ENCODE measurements at regions of chr2 and their contacts with region 1.

Region 1: DNA sequence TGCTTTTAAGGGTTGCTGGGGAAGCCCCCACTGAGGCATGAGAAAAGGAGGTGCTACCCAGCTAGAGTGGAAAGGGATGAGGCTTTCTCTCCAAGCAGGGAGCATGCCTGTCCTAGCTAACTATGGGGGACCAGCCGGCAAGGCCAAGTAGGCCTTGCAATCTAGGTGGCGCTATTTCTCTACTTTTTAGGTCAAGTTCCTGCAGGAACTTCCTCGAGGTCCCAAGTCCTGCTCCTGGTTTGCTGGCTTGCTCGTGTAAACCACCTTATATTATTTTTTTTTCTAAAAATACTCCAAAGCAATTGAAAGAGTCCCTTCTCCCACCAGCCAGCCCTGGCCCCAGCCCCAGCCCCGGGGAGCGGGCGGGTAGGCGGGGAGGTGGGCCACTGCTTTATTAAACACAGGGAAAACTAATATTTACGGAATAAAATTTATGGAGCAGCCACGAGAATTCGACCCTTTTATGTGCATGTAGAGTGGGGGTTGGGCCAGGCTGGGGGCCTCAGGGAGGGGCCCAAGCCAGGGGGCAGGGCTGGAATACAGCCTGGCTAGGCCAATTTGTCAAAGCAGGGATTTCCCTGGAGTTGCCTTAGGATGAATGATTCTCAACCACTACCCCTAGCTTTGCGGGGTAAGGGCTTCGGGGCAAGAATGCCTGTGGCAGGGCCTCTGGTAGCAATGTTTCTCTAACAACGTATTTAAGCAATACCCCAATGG is 12.8 kb upstream of the IHH start:
- DNase-seq: peak; percentile 77 to 78
- H3K4me3 ChIP-seq: no peak overlapping the region
- H3K4me3 Mint-ChIP-seq: peak overlapping the region; percentile 59
- H3K27ac Mint-ChIP-seq: peak overlapping the region; percentile 72
- H3K4me1 ChIP-seq: peaks cover 48% of the 10 kb centered on the region
- H3K4me1 Mint-ChIP-seq: peaks cover 46% of the 10 kb centered on the region
- H3K27me3 ChIP-seq: no peaks in the 10 kb centered on the region
- H3K27me3 Mint-ChIP-seq: no peaks in the 10 kb centered on the region
- CTCF ChIP-seq: peak; percentile 65 to 79

Region 2: DNA sequence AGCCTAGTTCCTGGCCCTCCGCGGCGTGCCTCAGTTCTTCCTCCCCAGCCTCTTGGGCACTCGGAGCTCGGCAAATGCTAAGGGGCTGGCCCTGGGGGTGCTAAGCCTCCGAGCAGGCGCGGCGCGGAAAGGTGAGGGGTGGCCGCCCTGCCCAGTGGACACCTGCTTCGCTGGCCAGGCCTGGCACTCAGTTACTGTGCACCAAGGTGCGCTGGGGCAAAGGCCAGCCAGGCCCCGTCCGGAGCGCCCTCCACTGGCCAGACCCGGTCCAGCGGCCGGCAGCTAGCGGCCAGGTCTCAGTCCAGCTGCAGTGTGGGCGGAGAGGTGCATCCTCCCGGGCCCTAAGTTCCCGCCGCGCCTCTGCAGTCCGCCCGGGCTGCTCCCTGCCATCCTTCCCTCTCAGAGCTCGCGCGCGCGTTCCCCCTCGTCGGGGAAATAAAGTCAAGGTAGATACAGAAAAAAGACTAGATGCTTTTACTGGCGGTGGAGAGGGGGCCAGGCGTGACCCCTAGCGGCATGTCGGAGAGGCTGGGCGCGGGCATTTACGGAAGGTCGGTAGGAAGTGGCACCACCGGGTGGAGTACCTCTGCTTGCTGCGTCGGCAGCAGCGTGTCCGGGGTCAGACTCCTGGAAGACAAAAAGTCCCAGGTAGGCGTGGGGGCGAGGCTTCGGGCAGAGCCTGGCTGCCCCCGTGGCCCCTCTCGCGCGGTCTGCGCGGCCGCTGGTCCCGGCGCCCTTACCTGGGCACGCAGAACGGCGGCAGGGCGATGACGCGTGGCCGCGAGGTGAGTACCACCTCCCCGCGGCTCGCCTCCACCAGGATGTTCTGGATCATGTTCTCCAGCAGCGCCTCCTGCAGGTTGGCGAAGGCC is 70.9 kb before region 1 on chr2:
- CTCF ChIA-PET with region 1: interaction called, 4 read pairs
- POLR2A ChIA-PET with region 1: no interaction called
- intact Hi-C with region 1: loop called (anchors 2 kb)
- DNase-seq: peak in 1 of 2 experiments; percentile 85
- H3K4me3 ChIP-seq: peak overlapping the region; percentile 67
- H3K4me3 Mint-ChIP-seq: peak overlapping the region; percentile 79
- H3K27ac Mint-ChIP-seq: no peak overlapping the region
- H3K4me1 ChIP-seq: peaks cover 25% of the 10 kb centered on the region
- H3K4me1 Mint-ChIP-seq: peaks cover 15% of the 10 kb centered on the region
- H3K27me3 ChIP-seq: no peaks in the 10 kb centered on the region
- H3K27me3 Mint-ChIP-seq: peaks cover 7% of the 10 kb centered on the region
- CTCF ChIP-seq: peak; percentile 48 to 77

Region 3: DNA sequence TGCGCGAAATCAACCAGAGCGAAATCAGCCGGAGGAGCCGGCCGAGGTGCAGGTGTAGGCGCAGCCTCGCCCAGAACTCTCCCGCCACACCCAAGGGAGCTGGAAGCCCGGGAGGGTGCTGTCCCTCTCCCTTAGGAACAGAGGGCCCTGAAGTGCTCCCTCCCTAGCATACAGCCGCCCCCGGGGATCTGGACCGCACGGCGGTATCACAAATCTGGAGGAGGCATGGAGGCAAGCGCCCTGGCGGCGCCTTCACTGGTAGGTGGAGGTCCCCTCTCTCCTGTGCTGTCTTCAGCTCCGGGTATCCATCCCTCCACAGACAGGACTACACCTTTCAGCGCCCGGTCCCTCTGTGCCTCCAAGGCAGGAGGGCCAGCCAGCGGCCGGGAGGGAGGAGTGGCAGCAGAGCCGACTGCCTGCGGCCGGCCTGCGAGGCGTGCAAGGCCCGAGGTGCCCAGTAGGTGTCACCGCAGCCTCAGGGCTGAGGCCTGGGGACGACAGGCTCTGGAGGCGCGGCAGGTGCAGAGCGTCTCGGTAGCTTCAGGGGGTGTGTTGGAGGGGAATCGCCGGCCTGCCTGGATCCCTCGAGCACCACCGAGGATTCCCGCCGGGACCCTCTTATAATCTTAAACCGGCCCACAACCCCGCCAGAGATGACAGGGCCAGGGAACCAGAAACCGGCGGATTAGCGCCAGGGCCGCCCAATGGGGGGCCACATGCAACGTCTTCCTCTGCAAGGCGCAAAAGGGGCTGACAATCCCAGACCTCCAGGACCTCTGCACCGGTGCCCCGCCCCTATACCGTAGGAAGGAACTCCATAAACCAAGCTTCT is 15.6 kb before region 1 on chr2:
- CTCF ChIA-PET with region 1: interaction called, 74 read pairs
- POLR2A ChIA-PET with region 1: interaction called, 23 read pairs
- intact Hi-C with region 1: loop called (anchors 1 kb)
- DNase-seq: peak; percentile 82 to 89
- H3K4me3 ChIP-seq: peak overlapping the region; percentile 99
- H3K4me3 Mint-ChIP-seq: peak overlapping the region; percentile 92
- H3K27ac Mint-ChIP-seq: no peak overlapping the region
- H3K4me1 ChIP-seq: peaks cover 11% of the 10 kb centered on the region
- H3K4me1 Mint-ChIP-seq: peaks cover 7% of the 10 kb centered on the region
- H3K27me3 ChIP-seq: no peaks in the 10 kb centered on the region
- H3K27me3 Mint-ChIP-seq: peaks cover 3% of the 10 kb centered on the region
- CTCF ChIP-seq: peak; percentile 91 to 95

Region 4: GRCh38 chr2:219104107-219105035 is 30.8 kb after region 1 on chr2:
- CTCF ChIA-PET with region 1: interaction called, 37 read pairs
- POLR2A ChIA-PET with region 1: no interaction called
- intact Hi-C with region 1: loop called (anchors 1 kb)
- DNase-seq: peak; percentile 60
- H3K4me3 ChIP-seq: no peak overlapping the region
- H3K4me3 Mint-ChIP-seq: no peak overlapping the region
- H3K27ac Mint-ChIP-seq: no peak overlapping the region
- H3K4me1 ChIP-seq: peaks cover 10% of the 10 kb centered on the region
- H3K4me1 Mint-ChIP-seq: peaks cover 4% of the 10 kb centered on the region
- H3K27me3 ChIP-seq: no peaks in the 10 kb centered on the region
- H3K27me3 Mint-ChIP-seq: no peaks in the 10 kb centered on the region
- CTCF ChIP-seq: peak; percentile 80 to 86

Region 5: DNA sequence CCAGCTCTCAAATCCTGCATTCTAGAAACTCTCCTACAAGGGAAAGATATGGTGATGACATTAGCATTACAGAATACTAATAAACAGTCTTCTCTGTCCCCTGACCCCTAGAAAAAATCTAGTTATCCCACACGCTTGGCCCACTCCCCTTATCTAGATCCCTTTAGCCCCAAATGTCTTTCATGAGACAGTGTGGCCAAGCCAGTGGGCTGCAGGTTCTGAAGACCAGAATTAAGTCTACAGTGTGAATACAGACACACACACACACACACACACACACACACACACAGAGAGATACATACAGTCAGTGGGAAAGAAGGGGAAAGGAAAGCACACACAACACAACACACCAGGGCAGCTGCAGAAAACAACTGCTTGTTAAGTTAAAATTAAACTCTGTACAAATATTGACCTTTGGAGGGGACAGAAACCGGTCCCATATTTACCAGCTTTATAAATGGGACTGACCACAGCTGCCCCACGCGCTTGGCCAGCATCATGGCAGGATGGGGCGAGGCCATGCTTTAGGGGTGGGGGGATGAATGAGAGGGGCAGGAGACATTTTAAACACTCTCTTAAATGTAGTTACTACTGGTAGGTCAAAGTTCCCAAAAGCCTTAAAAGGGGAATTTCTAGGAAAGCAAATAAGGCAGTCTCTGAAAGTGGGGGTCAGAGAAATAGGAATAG is 37.9 kb after region 1 on chr2:
- CTCF ChIA-PET with region 1: interaction called, 89 read pairs
- POLR2A ChIA-PET with region 1: no interaction called
- intact Hi-C with region 1: loop called (anchors 1 kb)
- DNase-seq: peak; percentile 63 to 81
- H3K4me3 ChIP-seq: no peak overlapping the region
- H3K4me3 Mint-ChIP-seq: peak overlapping the region; percentile 46
- H3K27ac Mint-ChIP-seq: peak overlapping the region; percentile 54
- H3K4me1 ChIP-seq: peaks cover 51% of the 10 kb centered on the region
- H3K4me1 Mint-ChIP-seq: peaks cover 41% of the 10 kb centered on the region
- H3K27me3 ChIP-seq: no peaks in the 10 kb centered on the region
- H3K27me3 Mint-ChIP-seq: no peaks in the 10 kb centered on the region
- CTCF ChIP-seq: no peak

Region 6: DNA sequence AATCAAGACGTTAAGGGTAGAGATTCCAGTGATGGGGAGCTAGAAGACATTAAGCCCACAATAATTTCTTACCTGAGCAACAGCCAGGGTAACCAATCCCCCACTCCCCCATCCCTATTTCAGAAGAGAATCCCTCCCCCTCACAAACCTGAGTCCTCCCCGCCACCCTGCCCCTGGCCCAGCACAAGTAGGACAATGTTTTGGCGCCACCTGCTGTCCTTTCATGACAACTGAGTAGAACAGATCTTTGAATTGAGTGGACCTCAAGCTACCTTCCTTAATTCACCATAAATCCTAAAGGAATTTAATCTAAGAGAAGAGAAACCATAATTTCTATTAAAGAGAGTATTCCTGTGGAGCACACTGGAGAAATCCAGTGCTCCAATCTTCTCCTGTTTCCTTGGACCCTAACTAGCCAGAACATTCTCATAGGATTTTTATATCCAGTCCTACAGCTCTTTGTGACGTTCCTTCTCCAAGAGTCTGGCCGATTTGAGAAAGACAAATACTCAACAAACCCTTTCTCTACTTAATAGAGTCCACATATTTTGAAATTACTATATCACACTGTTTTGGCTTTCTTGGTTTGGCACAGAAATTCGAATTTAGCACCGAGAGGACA is 46.0 kb after region 1 on chr2:
- CTCF ChIA-PET with region 1: interaction called, 89 read pairs
- POLR2A ChIA-PET with region 1: no interaction called
- intact Hi-C with region 1: loop called (anchors 1 kb)
- DNase-seq: peak; percentile 77 to 80
- H3K4me3 ChIP-seq: no peak overlapping the region
- H3K4me3 Mint-ChIP-seq: no peak overlapping the region
- H3K27ac Mint-ChIP-seq: no peak overlapping the region
- H3K4me1 ChIP-seq: peaks cover 36% of the 10 kb centered on the region
- H3K4me1 Mint-ChIP-seq: peaks cover 44% of the 10 kb centered on the region
- H3K27me3 ChIP-seq: no peaks in the 10 kb centered on the region
- H3K27me3 Mint-ChIP-seq: no peaks in the 10 kb centered on the region
- CTCF ChIP-seq: peak; percentile 84 to 89

Region 7: DNA sequence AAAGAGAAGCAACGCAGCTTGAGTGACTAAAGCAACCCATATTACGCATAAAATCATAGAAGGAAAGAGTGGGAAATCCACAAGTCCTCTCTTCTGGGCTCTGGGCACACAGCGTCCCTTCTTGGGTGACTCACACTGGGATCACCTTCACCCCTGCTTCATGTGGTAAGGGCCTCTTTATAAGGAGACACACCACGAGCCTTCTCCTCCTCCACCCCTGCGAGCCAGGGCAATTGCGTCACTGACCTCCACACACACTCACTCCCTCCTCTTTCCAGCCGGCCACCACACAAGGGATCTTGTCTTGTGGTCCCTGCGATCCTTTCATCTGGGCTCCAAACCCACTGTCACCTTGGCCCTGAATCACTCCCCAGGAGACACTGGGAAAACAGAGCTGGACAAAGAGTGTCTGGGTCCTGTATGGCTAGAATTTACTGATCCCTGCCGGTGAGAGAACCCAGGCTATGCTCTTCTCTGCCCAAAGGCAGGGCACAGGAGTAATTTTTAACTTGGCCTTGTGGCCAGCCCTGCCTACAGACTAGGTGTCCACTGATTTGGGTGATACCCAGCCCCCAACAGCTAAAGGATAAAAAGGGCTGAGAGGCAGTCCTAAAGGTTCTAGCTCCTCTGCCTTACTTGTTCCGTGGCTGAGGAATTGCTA is 51.8 kb after region 1 on chr2:
- CTCF ChIA-PET with region 1: interaction called, 89 read pairs
- POLR2A ChIA-PET with region 1: no interaction called
- intact Hi-C with region 1: loop called (anchors 1 kb)
- DNase-seq: peak; percentile 57 to 85
- H3K4me3 ChIP-seq: no peak overlapping the region
- H3K4me3 Mint-ChIP-seq: peak overlapping the region; percentile 53
- H3K27ac Mint-ChIP-seq: peak overlapping the region; percentile 25
- H3K4me1 ChIP-seq: peaks cover 73% of the 10 kb centered on the region
- H3K4me1 Mint-ChIP-seq: peaks cover 50% of the 10 kb centered on the region
- H3K27me3 ChIP-seq: no peaks in the 10 kb centered on the region
- H3K27me3 Mint-ChIP-seq: no peaks in the 10 kb centered on the region
- CTCF ChIP-seq: no peak

Region 8: GRCh38 chr2:219261024-219261855 is 187.7 kb after region 1 on chr2:
- CTCF ChIA-PET with region 1: no interaction called
- POLR2A ChIA-PET with region 1: no interaction called
- intact Hi-C with region 1: no loop called
- DNase-seq: no peak
- H3K4me3 ChIP-seq: no peak overlapping the region
- H3K4me3 Mint-ChIP-seq: no peak overlapping the region
- H3K27ac Mint-ChIP-seq: no peak overlapping the region
- H3K4me1 ChIP-seq: no peaks in the 10 kb centered on the region
- H3K4me1 Mint-ChIP-seq: no peaks in the 10 kb centered on the region
- H3K27me3 ChIP-seq: no peaks in the 10 kb centered on the region
- H3K27me3 Mint-ChIP-seq: peaks cover 13% of the 10 kb centered on the region
- CTCF ChIP-seq: no peak

Region 9: GRCh38 chr2:219402665-219403515 is 329.3 kb after region 1 on chr2:
- CTCF ChIA-PET with region 1: no interaction called
- POLR2A ChIA-PET with region 1: no interaction called
- intact Hi-C with region 1: no loop called
- DNase-seq: peak; percentile 78 to 80
- H3K4me3 ChIP-seq: no peak overlapping the region
- H3K4me3 Mint-ChIP-seq: no peak overlapping the region
- H3K27ac Mint-ChIP-seq: no peak overlapping the region
- H3K4me1 ChIP-seq: peaks cover 28% of the 10 kb centered on the region
- H3K4me1 Mint-ChIP-seq: peaks cover 28% of the 10 kb centered on the region
- H3K27me3 ChIP-seq: no peaks in the 10 kb centered on the region
- H3K27me3 Mint-ChIP-seq: no peaks in the 10 kb centered on the region
- CTCF ChIP-seq: peak; percentile 82 to 95